ENCODE measurements at regions of chr2 and their contacts with region 1.

Region 1: GRCh38 chr2:3379647-3380534 is at the start of gene TRAPPC12:
- DNase-seq: peak; percentile 95
- ATAC-seq: peak; percentile 85
- H3K4me3 ChIP-seq: peak within 1 kb of the TSS; percentile 85 to 96 (median 92)
- H3K27ac ChIP-seq: peak within 1 kb of the TSS; percentile 96
- H3K4me1 ChIP-seq: peaks cover 50% of the 10 kb centered on the region
- H3K27me3 ChIP-seq: no peaks in the 10 kb centered on the region; a peak in 1 of 5 replicates
- CTCF ChIP-seq: peak; percentile 95
- EP300 ChIP-seq: peak in 1 of 2 experiments; percentile 85; a peak in 3 of 4 replicates
- POLR2A ChIP-seq: peak; percentile 82 to 94
- RAD21 ChIP-seq: peak; percentile 79
- total RNA-seq, gene TRAPPC12: 39.0 and 46.4 TPM in 2 replicates

Region 2: GRCh38 chr2:3025261-3025660 is 354.6 kb before region 1 on chr2:
- CTCF ChIA-PET with region 1: no interaction called
- POLR2A ChIA-PET with region 1: no interaction called
- in situ Hi-C with region 1: no loop called
- intact Hi-C with region 1: no loop called
- DNase-seq: no peak
- ATAC-seq: no peak
- H3K4me3 ChIP-seq: no peak overlapping the region
- H3K27ac ChIP-seq: no peak overlapping the region
- H3K4me1 ChIP-seq: no peaks in the 10 kb centered on the region
- H3K27me3 ChIP-seq: peaks cover 0 to 37% of the 10 kb centered on the region in 2 experiments; a peak in 3 of 5 replicates
- CTCF ChIP-seq: no peak
- EP300 ChIP-seq: no peak
- POLR2A ChIP-seq: no peak
- RAD21 ChIP-seq: no peak

Region 3: GRCh38 chr2:3324404-3325281 is 55.2 kb before region 1 on chr2:
- CTCF ChIA-PET with region 1: no interaction called
- POLR2A ChIA-PET with region 1: interaction called, 5 read pairs
- in situ Hi-C with region 1: no loop called
- intact Hi-C with region 1: loop called (anchors 2 kb)
- DNase-seq: peak; percentile 75
- ATAC-seq: peak; percentile 94
- H3K4me3 ChIP-seq: peak overlapping the region in 2 of 3 experiments; percentile 14 to 49; a peak in 4 of 6 replicates
- H3K27ac ChIP-seq: peak overlapping the region; percentile 65
- H3K4me1 ChIP-seq: peaks cover 21% of the 10 kb centered on the region
- H3K27me3 ChIP-seq: no peaks in the 10 kb centered on the region
- CTCF ChIP-seq: peak; percentile 40
- EP300 ChIP-seq: peak in 1 of 2 experiments; percentile 27; a peak in 1 of 4 replicates
- POLR2A ChIP-seq: no peak; a peak in 1 of 4 replicates
- RAD21 ChIP-seq: no peak

Region 4: DNA sequence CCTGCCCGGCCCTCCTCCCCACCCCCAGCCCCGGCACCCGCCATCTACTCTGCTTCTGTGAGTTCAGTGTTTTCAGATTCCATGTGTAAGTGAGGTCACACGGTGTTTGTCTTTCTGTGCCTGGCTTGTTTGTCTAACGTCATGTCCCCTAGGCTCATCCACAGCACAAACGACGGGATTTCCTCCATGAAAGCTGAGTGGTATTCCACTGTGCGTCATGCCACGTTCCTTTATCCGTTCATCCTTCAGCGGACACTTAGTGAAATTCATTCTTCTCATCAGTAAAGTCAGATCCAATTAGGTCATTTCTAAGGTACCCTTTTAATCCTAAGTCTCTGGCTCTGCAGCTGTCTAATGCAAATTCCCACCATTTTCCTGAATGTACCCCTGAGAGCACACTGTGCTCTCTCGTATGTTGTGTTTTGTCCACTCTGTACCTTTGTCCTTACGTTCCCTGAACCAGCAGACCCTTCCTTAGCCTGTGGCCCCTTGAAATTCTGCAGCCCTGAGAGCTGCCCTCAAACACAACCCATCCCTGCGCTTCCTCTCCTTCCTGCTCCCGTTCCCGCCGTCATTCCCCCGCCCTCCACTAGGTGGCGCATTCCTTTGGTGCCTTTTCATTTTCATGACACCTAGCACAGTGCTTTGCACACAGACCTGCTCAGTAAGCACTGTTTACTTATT is 43.7 kb after region 1 on chr2:
- CTCF ChIA-PET with region 1: no interaction called
- POLR2A ChIA-PET with region 1: interaction called, 16 read pairs
- in situ Hi-C with region 1: no loop called
- intact Hi-C with region 1: no loop called
- DNase-seq: peak; percentile 83
- ATAC-seq: peak; percentile 87
- H3K4me3 ChIP-seq: no peak overlapping the region
- H3K27ac ChIP-seq: peak overlapping the region; percentile 32
- H3K4me1 ChIP-seq: peaks cover 16% of the 10 kb centered on the region
- H3K27me3 ChIP-seq: no peaks in the 10 kb centered on the region
- CTCF ChIP-seq: peak; percentile 98
- EP300 ChIP-seq: no peak
- POLR2A ChIP-seq: no peak
- RAD21 ChIP-seq: peak; percentile 73

Region 5: GRCh38 chr2:3518496-3519254 is 138.8 kb after region 1 on chr2:
- CTCF ChIA-PET with region 1: no interaction called
- POLR2A ChIA-PET with region 1: interaction called, 7 read pairs
- in situ Hi-C with region 1: no loop called
- intact Hi-C with region 1: loop called (anchors 5 kb)
- DNase-seq: peak; percentile 97
- ATAC-seq: peak; percentile 70
- H3K4me3 ChIP-seq: peak overlapping the region; percentile 67 to 88 (median 81)
- H3K27ac ChIP-seq: peak overlapping the region; percentile 96
- H3K4me1 ChIP-seq: peaks cover 74% of the 10 kb centered on the region
- H3K27me3 ChIP-seq: no peaks in the 10 kb centered on the region
- CTCF ChIP-seq: peak; percentile 17; the same call in 1 of the 2 replicates
- EP300 ChIP-seq: no peak
- POLR2A ChIP-seq: peak in 1 of 2 experiments; percentile 91; a peak in 2 of 4 replicates
- RAD21 ChIP-seq: peak; percentile 40

Region 6: DNA sequence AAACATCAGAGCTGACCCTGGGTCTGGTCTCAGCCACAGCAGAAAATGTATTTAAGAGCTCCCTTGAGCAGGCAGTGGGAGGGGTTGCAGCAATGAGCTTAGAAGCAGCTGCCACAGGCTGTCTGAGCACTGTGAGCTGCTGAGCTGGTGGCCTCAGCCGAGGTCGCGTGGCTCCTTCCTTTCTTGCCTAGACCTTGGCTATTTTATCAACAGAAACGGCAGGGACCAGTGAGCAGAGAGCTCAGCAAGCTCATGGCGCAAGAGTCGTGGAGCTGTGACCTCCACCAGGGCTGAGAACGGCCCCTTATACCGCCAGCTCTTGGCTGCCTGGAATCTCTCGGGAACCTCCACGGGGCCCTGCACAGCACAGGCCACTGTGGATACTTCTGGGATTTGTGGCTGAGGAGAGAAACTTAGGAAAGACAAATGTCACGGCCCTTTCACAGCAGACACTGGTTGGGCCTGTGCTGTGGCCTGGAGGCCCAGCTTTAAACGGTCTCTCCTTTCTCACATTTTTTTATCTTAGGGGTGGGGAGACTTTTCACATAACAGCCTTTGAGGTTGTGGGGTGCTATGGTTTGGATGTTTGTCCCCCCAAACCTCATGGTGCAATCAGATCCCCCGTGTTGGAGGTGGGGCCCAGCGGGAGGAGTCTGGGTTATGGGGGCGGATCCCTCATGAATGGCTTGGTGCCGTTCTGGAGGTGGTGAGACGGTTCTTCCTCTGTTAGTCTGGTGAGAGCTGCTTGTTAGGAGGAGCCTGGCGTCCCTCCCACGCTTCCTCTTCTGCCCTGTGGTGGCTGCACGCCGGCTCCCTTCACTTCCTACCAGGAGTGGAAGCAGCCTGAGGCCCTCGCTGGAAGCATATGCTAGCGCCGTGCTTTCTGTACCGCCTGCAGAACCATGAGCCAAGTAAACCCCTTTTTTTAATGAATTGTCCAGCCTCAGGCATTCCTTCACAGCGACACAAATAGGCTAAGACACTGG is 279.8 kb after region 1 on chr2:
- CTCF ChIA-PET with region 1: no interaction called
- POLR2A ChIA-PET with region 1: interaction called, 6 read pairs
- in situ Hi-C with region 1: no loop called
- intact Hi-C with region 1: loop called (anchors 5 kb)
- DNase-seq: peak; percentile 47
- ATAC-seq: peak; percentile 56
- H3K4me3 ChIP-seq: peak overlapping the region; percentile 33 to 56 (median 41); a peak in 5 of 6 replicates
- H3K27ac ChIP-seq: peak overlapping the region; percentile 15
- H3K4me1 ChIP-seq: peaks cover 66% of the 10 kb centered on the region
- H3K27me3 ChIP-seq: peaks cover 0 to 10% of the 10 kb centered on the region in 2 experiments; a peak in 2 of 5 replicates
- CTCF ChIP-seq: no peak
- EP300 ChIP-seq: no peak
- POLR2A ChIP-seq: 0 out of 4 replicates have a peak, but pooled peaks of 1 of the 2 experiments have one; percentile 18
- RAD21 ChIP-seq: no peak